ENCODE measurements at regions of chr5 and their contacts with region 1.

Region 1: DNA sequence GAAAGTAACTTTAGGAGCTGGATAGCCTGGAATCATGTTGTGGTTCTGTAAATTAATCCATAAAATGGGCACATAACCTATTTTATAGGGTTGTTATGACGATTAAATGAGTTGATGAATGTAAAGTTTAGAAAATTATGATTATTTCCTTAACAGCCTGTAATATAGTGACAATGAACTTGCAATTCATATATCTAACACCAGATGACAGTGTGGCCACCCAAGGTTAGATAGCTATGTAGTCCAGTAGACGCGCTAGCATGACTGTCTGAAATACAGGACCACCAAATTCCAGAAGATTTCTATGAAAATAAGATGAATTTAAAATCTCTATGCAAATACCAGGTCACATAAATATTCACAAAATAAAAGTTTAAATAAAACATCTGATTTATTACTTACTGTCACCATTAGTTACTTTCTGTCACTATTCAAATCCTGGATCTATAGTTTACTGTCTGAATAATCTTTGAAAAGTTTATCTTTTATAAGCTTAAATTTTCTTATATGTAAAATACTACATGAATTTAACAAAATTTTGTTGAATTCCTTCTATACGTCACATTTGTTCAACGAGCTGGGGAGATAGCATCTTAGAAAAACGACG is 26.1 kb upstream of the MACIR start:
- DNase-seq: no peak
- H3K4me3 ChIP-seq: no peak overlapping the region
- CTCF ChIP-seq: peak; percentile 38

Region 2: DNA sequence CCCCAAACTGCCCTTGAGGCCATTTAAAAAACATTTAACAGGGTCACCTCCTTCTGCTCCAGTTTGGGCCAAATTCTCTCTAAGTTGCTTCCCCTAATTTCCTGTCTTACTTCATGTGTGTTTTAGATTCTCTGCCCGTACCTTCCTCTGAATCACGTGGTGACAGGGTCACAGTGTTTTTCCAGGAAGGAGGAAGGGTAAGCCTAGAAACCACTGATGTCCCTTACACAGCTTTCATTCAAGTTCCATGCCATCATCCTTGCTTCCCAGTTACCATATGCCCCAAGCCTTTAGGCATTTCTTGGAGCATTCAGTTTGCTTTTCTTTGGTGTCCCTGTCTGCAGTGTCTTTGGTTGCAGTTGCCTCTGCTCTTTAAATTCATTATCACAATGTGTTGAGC is 16.3 kb before region 1 on chr5:
- CTCF ChIA-PET with region 1: interaction called, 11 read pairs
- POLR2A ChIA-PET with region 1: no interaction called
- DNase-seq: no peak
- H3K4me3 ChIP-seq: no peak overlapping the region
- CTCF ChIP-seq: no peak

Measured in AG04449 (cell line).